Common myeloid progenitor, CD34-positive (primary cell): ENCODE measurements at regions of chr5 and their contacts with region 1.

Region 1: GRCh38 chr5:132500931-132501630 is 10.5 kb upstream of the IRF1 start:
- DNase-seq: peak; percentile 82 to 91 (median 91)
- H3K4me3 ChIP-seq: no peak overlapping the region
- H3K27ac ChIP-seq: peak overlapping the region in 1 of 2 experiments; percentile 35
- H3K4me1 ChIP-seq: peaks cover 0 to 40% (median 29%) of the 10 kb centered on the region in 4 experiments
- H3K27me3 ChIP-seq: no peaks in the 10 kb centered on the region

Region 2: DNA sequence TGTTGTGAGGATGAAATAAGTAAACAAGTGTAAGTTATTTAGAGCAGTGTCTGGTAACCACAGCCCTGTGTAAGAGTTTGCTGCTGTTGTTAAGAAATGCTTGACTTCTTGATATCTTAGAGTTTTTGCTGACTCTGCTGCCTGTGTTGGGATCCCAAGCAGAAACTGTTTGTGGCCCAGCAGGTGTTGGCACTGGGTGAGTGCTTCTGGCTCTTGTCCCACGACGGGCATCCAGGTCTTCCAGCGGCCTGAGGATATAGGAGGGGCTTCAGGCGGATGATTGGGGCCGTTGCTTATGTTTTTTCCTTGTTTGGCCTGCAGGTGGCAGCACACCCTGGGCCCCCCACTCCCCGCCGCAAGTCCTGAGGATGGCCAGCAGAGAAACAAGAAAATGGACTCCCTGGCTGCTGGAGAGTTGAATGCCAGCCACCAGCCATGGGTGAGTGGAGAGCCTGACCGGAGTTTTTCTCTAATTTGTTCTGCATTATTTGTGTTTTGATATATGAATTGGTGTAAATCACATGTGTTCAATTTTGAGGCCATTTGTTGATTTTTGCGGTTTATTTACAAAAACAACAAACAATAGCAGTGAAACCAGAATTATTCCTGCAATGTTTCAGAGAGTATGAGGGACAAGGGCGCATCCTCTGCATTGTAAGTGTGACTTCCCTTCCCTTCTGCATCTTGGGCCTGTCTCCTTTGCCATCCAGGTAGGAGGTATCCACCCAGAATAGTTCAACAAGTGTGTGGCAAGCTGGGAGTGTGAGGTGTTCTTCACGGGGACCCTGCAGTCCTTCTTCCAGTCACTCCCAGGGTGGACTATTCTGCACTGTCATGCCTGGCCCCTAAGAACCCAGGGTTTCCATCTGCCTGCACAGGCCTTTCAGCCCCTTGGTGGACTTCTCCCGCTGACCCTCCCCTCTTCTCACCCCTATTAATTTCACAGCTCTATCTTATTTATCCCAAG is 81.3 kb before region 1 on chr5:
- CTCF ChIA-PET with region 1: interaction called, 56 read pairs
- POLR2A ChIA-PET with region 1: interaction called, 5 read pairs
- DNase-seq: peak; percentile 74 to 83 (median 81)
- H3K4me3 ChIP-seq: peak overlapping the region in 4 of 7 experiments; percentile 27 to 58 (median 39)
- H3K27ac ChIP-seq: peak overlapping the region; percentile 71 to 80
- H3K4me1 ChIP-seq: peaks cover 41 to 97% (median 83%) of the 10 kb centered on the region in 4 experiments
- H3K27me3 ChIP-seq: no peaks in the 10 kb centered on the region

Region 3: DNA sequence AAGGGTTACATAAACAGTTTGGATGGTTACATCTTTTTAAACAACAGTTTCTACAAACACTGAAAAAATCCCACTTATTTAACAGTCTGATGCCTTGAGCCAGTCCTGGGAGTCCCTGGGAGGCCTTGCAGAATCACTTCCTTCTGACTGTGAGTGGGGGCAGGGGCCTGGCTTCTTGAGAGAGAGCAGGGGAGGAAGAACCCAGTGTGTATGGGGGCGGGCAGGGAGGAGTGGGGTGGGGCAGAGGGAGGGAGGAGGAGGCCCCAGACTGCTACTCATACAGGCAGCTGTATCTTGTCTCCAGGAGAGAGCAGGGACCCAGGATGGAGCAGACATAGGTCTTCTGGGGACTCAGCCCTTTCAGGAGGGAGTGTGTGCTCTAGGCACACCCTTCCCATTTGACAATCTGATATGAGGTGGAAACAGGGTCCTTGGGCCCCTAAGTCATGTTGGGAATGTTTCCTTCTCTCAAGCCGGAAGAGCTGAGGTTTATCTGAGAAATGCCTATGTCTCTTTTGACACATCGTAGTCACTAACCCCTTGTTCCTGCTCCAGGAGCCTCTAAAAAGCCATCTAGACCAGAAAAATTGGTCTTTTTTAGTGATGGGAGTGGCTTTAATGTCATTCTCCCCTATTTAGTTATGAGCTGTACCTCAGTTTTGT is 63.3 kb before region 1 on chr5:
- CTCF ChIA-PET with region 1: interaction called, 38 read pairs
- POLR2A ChIA-PET with region 1: no interaction called
- DNase-seq: peak in 2 of 3 donors; percentile 62 to 72
- H3K4me3 ChIP-seq: peak overlapping the region in 1 of 7 experiments; percentile 10
- H3K27ac ChIP-seq: peak overlapping the region; percentile 37 to 75
- H3K4me1 ChIP-seq: peaks cover 16 to 74% (median 62%) of the 10 kb centered on the region in 4 experiments
- H3K27me3 ChIP-seq: no peaks in the 10 kb centered on the region

Region 4: GRCh38 chr5:132612846-132613245 is 111.8 kb after region 1 on chr5:
- CTCF ChIA-PET with region 1: no interaction called
- POLR2A ChIA-PET with region 1: no interaction called
- DNase-seq: no peak
- H3K4me3 ChIP-seq: no peak overlapping the region
- H3K27ac ChIP-seq: no peak overlapping the region
- H3K4me1 ChIP-seq: no peaks in the 10 kb centered on the region
- H3K27me3 ChIP-seq: no peaks in the 10 kb centered on the region